ENCODE measurements at regions of chr5 and their contacts with region 1.

Region 1: DNA sequence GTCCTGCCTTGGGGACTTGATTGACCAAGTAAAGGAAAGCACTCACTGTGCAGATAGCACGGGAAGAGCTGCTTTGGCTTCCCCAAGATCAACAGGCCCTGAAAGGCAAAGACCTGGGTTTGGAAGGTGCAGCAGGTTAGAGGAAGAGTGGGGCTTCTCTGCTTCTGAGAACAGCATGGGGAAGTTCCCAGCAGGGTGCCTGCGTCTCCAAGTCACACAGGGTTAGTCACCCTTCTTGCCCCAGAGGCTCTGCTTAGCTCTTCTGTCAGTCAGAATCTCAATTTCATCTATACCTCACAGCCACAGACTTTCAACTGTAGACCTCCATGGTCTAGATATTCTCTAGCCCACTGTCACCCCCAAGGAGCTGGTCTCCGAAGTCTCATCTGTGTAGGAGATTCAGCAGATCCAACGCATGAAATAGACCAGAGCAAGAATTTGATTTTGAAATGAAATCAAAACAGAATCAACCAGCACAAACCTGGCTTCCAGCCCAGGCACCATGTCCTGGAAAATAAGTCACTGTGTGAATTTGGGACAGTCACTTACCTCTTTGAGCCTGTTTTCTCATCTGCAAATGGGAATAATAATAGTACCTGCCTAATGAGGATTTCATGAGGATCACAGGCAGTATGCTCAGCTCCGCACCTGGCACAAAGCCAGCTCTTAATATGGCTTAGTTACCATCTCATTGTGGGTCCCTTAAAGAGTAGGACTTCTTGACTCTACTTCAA is 64.0 kb downstream of the SFXN1 start:
- DNase-seq: no peak
- H3K4me3 ChIP-seq: no peak overlapping the region
- H3K4me1 ChIP-seq: peaks cover 1% of the 10 kb centered on the region
- H3K27me3 ChIP-seq: peaks cover 35% of the 10 kb centered on the region

Region 2: GRCh38 chr5:175718401-175719108 is 176.2 kb after region 1 on chr5:
- in situ Hi-C with region 1: loop called (anchors 5 kb)
- DNase-seq: peak; percentile 22 to 73
- H3K4me3 ChIP-seq: no peak overlapping the region
- H3K4me1 ChIP-seq: no peaks in the 10 kb centered on the region
- H3K27me3 ChIP-seq: no peaks in the 10 kb centered on the region; the same call in 1 of the 2 replicates